HCT116 (cell line): ENCODE measurements at regions of chr17 and their contacts with region 1.

Region 1: GRCh38 chr17:47615766-47616424 is 33.8 kb upstream of the KPNB1 start:
- DNase-seq: peak; percentile 52
- ATAC-seq: peak; percentile 64
- H3K4me3 ChIP-seq: no peak overlapping the region
- H3K27ac ChIP-seq: no peak overlapping the region
- H3K4me1 ChIP-seq: peaks cover 18 to 59% of the 10 kb centered on the region in 2 experiments
- H3K27me3 ChIP-seq: no peaks in the 10 kb centered on the region
- CTCF ChIP-seq: peak; percentile 59 to 93 (median 83)
- POLR2A ChIP-seq: no peak
- RAD21 ChIP-seq: peak; percentile 90

Region 2: GRCh38 chr17:47162013-47162622 is 453.8 kb before region 1 on chr17:
- CTCF ChIA-PET with region 1: no interaction called
- POLR2A ChIA-PET with region 1: no interaction called
- RAD21 ChIA-PET with region 1: no interaction called
- intact Hi-C with region 1: loop called (anchors 10 kb)
- DNase-seq: no peak
- ATAC-seq: no peak
- H3K4me3 ChIP-seq: no peak overlapping the region
- H3K27ac ChIP-seq: no peak overlapping the region
- H3K4me1 ChIP-seq: no peaks in the 10 kb centered on the region
- H3K27me3 ChIP-seq: no peaks in the 10 kb centered on the region
- CTCF ChIP-seq: no peak
- POLR2A ChIP-seq: no peak
- RAD21 ChIP-seq: no peak

Region 3: DNA sequence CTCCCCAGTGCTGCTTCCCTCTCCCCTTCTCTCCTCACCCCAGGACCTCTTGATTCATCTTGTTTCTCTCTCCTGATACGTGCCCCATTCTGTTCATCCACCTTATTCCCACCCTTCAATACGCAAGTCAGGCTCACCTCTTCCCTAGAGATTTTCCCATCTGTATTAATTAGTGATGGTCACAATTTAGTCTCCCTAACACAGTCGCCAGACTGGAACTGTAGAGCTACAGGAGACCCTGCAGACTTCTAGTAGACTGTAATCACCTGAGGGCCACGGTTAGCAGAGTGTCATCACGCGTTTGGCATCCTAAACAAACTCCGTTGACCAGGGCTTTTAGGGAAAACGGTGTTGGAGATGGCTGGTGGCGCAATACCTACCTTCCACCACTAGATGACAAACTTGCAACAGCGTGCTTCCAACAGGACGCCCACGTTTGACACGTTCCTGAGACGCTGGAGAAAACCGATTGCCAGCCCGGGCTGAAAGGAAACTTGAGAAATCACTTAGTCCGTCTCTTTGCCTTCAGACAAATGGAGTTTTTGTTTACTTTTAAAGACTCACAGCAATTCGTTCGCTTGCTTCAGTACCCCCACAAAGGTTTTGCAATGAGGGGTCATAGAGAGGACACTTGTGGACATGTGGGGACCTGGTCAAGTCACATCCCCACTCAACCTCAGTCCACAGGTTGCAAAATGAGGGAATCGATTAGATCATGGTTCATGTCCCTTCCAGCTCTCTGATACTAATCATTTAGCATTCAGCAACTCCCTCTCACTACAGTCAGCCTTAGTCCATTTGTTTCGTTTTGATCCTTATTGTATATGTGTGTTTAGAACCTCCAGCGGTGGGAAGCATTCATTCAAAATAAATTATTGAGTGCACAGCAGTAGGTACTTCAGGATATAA is 386.1 kb before region 1 on chr17:
- CTCF ChIA-PET with region 1: interaction called, 3 read pairs
- POLR2A ChIA-PET with region 1: no interaction called
- RAD21 ChIA-PET with region 1: no interaction called
- intact Hi-C with region 1: loop called (anchors 1 kb)
- DNase-seq: peak; percentile 90
- ATAC-seq: peak; percentile 92
- H3K4me3 ChIP-seq: peak overlapping the region; percentile 15 to 21
- H3K27ac ChIP-seq: no peak overlapping the region
- H3K4me1 ChIP-seq: peaks cover 14 to 28% of the 10 kb centered on the region in 2 experiments
- H3K27me3 ChIP-seq: no peaks in the 10 kb centered on the region
- CTCF ChIP-seq: peak; percentile 97 to 100 (median 99)
- POLR2A ChIP-seq: no peak
- RAD21 ChIP-seq: peak; percentile 100

Region 4: GRCh38 chr17:47315451-47316266 is 300.2 kb before region 1 on chr17:
- CTCF ChIA-PET with region 1: interaction called, 5 read pairs
- POLR2A ChIA-PET with region 1: no interaction called
- RAD21 ChIA-PET with region 1: interaction called in 1 of 2 experiments, 3 read pairs
- intact Hi-C with region 1: loop called (anchors 5 kb)
- DNase-seq: peak; percentile 74
- ATAC-seq: peak; percentile 97
- H3K4me3 ChIP-seq: no peak overlapping the region
- H3K27ac ChIP-seq: no peak overlapping the region
- H3K4me1 ChIP-seq: peaks cover 0 to 4% of the 10 kb centered on the region in 2 experiments; a peak in 1 of 4 replicates
- H3K27me3 ChIP-seq: no peaks in the 10 kb centered on the region
- CTCF ChIP-seq: peak; percentile 81 to 98 (median 96)
- POLR2A ChIP-seq: no peak
- RAD21 ChIP-seq: peak; percentile 98

Region 5: GRCh38 chr17:47363171-47363570 is 252.7 kb before region 1 on chr17:
- CTCF ChIA-PET with region 1: interaction called, 10 read pairs
- POLR2A ChIA-PET with region 1: no interaction called
- RAD21 ChIA-PET with region 1: no interaction called
- intact Hi-C with region 1: loop called (anchors 1 kb)
- DNase-seq: no peak
- ATAC-seq: no peak
- H3K4me3 ChIP-seq: no peak overlapping the region
- H3K27ac ChIP-seq: no peak overlapping the region
- H3K4me1 ChIP-seq: no peaks in the 10 kb centered on the region
- H3K27me3 ChIP-seq: no peaks in the 10 kb centered on the region
- CTCF ChIP-seq: no peak
- POLR2A ChIP-seq: no peak
- RAD21 ChIP-seq: no peak

Region 6: GRCh38 chr17:48024937-48025906 is 409.3 kb after region 1 on chr17:
- CTCF ChIA-PET with region 1: no interaction called
- POLR2A ChIA-PET with region 1: no interaction called
- RAD21 ChIA-PET with region 1: no interaction called
- intact Hi-C with region 1: no loop called
- DNase-seq: peak; percentile 98
- ATAC-seq: peak; percentile 73
- H3K4me3 ChIP-seq: peak overlapping the region; percentile 61 to 62
- H3K27ac ChIP-seq: peak overlapping the region; percentile 93
- H3K4me1 ChIP-seq: peaks cover 26 to 45% of the 10 kb centered on the region in 2 experiments
- H3K27me3 ChIP-seq: no peaks in the 10 kb centered on the region
- CTCF ChIP-seq: peak in 2 of 3 experiments; percentile 87 to 92; a peak in 4 of 6 replicates
- POLR2A ChIP-seq: peak; percentile 69
- RAD21 ChIP-seq: no peak